Activated CD4-positive, alpha-beta memory T cell treated with anti-CD3 and anti-CD28 coated beads for 36 hours (primary cell): ENCODE measurements at regions of chr7 and their contacts with region 1.

Region 1: DNA sequence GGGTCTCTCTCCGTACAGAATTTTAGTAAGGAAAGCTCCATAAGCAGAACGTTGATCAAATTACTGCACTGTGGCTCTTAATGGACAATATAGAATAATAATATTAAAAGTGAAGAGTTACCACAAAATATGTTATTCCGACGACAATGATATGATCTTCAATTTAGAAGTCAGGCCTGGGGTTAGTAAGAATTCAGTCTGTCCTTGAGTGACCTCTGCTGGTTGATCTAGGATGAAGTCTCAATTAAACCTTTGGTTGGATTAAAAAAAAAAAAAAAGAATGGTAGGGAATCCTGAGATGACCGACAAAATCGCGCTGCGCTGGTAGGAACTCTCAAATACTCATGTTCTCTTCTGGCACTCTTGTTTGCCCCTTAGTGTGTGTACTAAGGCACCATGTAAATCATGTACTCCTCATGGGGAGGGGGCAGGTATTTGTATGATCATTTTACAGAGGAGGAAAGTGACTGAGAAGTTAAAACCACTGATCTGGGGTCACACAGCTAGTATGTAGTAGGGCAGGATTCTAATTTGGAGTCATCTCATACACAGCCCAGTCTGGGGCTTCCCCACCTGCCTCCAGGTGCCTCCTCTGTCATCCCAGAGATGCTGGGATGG is 161.3 kb upstream of the NPVF start:
- DNase-seq: no peak
- H3K4me3 Mint-ChIP-seq: no peak overlapping the region
- H3K27ac Mint-ChIP-seq: no peak overlapping the region
- H3K4me1 Mint-ChIP-seq: no peaks in the 10 kb centered on the region
- H3K27me3 Mint-ChIP-seq: peaks cover 9% of the 10 kb centered on the region

Region 2: GRCh38 chr7:25427721-25428120 is 38.1 kb after region 1 on chr7:
- CTCF ChIA-PET with region 1: no interaction called
- POLR2A ChIA-PET with region 1: no interaction called
- intact Hi-C with region 1: no loop called
- DNase-seq: no peak
- H3K4me3 Mint-ChIP-seq: no peak overlapping the region
- H3K27ac Mint-ChIP-seq: no peak overlapping the region
- H3K4me1 Mint-ChIP-seq: no peaks in the 10 kb centered on the region
- H3K27me3 Mint-ChIP-seq: peaks cover 1% of the 10 kb centered on the region

Region 3: DNA sequence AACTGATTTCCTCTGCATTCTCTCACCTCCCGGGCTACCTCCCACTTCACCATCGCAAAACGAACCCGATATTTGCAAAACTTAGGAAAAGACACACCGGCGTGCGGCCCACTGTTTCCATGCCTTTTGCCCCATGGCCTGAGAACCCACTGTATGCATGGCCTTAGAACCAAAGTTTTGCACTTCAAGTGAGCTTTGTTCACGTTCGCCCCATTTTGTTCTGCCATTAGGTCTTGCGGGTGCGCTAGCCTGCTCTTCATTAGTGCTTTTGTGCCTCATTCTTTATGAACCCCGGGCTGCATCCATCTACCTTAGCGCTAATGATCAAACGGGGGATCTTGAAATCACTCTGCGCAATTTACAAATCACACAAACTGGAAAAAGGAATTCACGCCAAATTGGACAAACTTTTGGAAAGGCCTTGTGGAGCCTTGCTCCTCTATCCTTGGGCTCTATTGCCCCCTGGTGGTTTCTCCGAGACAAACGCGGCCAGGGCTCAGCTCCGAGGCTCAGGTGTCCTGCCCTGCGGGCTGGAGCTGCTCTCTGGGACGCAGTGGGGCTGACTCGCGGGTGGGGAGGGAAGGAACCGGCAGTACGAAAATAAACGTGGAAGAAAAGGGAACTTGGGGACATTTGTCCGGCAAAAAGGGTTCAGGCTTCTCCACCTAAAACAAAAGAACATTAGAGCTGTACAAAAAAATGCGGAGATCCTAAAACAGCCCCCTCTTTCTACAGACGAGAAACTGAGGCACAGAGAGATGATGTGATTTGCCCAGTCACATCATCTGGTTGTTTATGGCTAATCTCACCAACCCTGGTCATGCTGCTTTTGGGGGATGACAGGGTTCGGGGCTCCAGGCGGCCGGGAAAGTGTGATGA is 462.0 kb after region 1 on chr7:
- CTCF ChIA-PET with region 1: no interaction called
- POLR2A ChIA-PET with region 1: no interaction called
- intact Hi-C with region 1: loop called (anchors 2 kb)
- DNase-seq: peak; percentile 78
- H3K4me3 Mint-ChIP-seq: peak overlapping the region; percentile 65
- H3K27ac Mint-ChIP-seq: no peak overlapping the region
- H3K4me1 Mint-ChIP-seq: peaks cover 11% of the 10 kb centered on the region
- H3K27me3 Mint-ChIP-seq: peaks cover 51% of the 10 kb centered on the region